ENCODE measurements at regions of chr6 and their contacts with region 1.

Region 1: GRCh38 chr6:37381579-37381978 is 27.8 kb downstream of the RNF8 start:
- DNase-seq: peak; percentile 31
- ATAC-seq: peak; percentile 68
- H3K4me3 Mint-ChIP-seq: no peak overlapping the region
- H3K27ac Mint-ChIP-seq: no peak overlapping the region
- H3K4me1 Mint-ChIP-seq: no peaks in the 10 kb centered on the region
- H3K27me3 Mint-ChIP-seq: no peaks in the 10 kb centered on the region

Region 2: DNA sequence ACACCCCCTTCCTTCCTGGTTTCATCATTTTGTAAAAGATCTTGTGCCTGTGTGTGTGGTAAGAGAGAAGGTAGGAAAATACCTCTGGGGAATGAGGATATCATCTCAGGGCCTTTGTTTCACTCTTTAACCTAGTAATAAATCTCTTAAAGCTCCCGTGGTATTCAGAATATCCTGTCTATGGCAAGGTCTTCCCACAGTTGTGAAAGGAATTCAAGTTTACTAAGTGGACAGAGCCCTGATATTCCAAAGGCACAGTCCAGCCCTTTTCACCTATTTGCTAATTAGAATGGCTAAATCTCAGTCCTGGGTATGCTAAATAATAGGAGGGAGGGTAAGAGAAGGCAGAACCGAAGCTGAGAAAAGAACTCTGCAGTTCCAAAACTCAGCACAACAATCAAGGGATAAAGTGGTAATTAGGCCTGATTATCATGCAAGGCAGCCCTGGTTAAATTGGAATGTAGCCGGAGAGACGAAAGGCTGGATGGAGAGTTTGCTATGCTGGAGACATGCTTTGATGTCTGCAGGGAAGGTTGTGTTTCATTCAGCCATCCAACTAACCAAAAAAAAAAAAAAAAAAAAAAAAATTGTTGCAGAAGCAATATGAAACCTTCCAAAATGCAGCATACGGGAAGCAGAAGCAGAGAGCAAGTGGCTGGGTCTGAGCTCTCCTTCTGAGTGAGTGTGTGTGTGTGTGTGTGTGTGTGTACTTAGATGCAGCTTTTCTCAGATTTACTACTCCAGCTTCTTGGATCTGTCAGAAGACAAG is 240.1 kb before region 1 on chr6:
- CTCF ChIA-PET with region 1: no interaction called
- POLR2A ChIA-PET with region 1: no interaction called
- intact Hi-C with region 1: no loop called
- DNase-seq: peak; percentile 37
- ATAC-seq: peak; percentile 38
- H3K4me3 Mint-ChIP-seq: no peak overlapping the region
- H3K27ac Mint-ChIP-seq: peak overlapping the region; percentile 73
- H3K4me1 Mint-ChIP-seq: peaks cover 41% of the 10 kb centered on the region
- H3K27me3 Mint-ChIP-seq: no peaks in the 10 kb centered on the region

Region 3: GRCh38 chr6:37169496-37170272 is 211.9 kb before region 1 on chr6 and contains the start of gene PIM1:
- CTCF ChIA-PET with region 1: no interaction called
- POLR2A ChIA-PET with region 1: no interaction called
- intact Hi-C with region 1: no loop called
- DNase-seq: peak; percentile 100
- ATAC-seq: peak; percentile 76
- H3K4me3 Mint-ChIP-seq: peak within 1 kb of the TSS; percentile 91
- H3K27ac Mint-ChIP-seq: peak within 1 kb of the TSS; percentile 96
- H3K4me1 Mint-ChIP-seq: peaks cover 39% of the 10 kb centered on the region
- H3K27me3 Mint-ChIP-seq: no peaks in the 10 kb centered on the region
- total RNA-seq, gene PIM1: 137 to 163 TPM

Region 4: GRCh38 chr6:37371154-37372083 is 10.2 kb before region 1 on chr6:
- CTCF ChIA-PET with region 1: interaction called, 11 read pairs
- POLR2A ChIA-PET with region 1: no interaction called
- intact Hi-C with region 1: no loop called
- DNase-seq: no peak
- ATAC-seq: no peak
- H3K4me3 Mint-ChIP-seq: no peak overlapping the region
- H3K27ac Mint-ChIP-seq: no peak overlapping the region
- H3K4me1 Mint-ChIP-seq: peaks cover 3% of the 10 kb centered on the region
- H3K27me3 Mint-ChIP-seq: no peaks in the 10 kb centered on the region

Region 5: GRCh38 chr6:37393381-37393929 is 11.9 kb after region 1 on chr6:
- CTCF ChIA-PET with region 1: interaction called, 10 read pairs
- POLR2A ChIA-PET with region 1: interaction called, 3 read pairs
- intact Hi-C with region 1: no loop called
- DNase-seq: no peak
- ATAC-seq: no peak
- H3K4me3 Mint-ChIP-seq: no peak overlapping the region
- H3K27ac Mint-ChIP-seq: no peak overlapping the region
- H3K4me1 Mint-ChIP-seq: no peaks in the 10 kb centered on the region
- H3K27me3 Mint-ChIP-seq: peaks cover 2% of the 10 kb centered on the region

Region 6: DNA sequence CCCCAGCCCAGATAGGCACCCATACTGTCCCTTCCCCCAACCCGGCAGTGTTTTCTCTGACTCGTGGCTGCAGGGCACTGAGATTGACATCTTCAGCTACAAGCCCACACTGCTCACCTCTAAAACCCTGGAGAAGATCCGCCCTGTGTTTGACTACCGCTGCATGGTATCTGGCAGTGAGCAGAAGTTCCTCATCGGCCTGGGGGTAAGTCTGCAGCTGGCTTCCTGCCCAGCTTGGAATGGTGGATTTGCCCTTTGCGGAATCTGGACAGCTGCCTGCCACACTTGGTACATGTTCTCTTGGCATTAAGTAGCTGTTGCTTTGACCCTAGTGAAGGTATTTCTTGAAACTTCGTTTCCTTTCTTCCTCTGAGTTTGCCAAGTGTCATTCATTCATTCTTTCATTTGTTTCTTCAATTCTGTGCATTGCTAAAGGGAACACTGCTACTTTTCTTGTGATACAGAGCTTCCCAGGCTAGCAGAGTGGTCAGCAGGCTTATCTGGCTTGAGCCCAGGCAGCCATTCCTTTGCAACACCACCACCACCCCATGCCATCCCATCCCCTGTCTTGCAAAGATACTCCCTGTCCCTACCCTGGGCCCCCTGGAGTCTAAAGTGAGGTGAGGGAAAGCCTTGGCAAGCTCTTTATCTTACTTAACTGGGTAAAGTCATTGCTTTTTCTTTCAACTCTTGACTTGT is 92.0 kb after region 1 on chr6:
- CTCF ChIA-PET with region 1: no interaction called
- POLR2A ChIA-PET with region 1: no interaction called
- intact Hi-C with region 1: no loop called
- DNase-seq: no peak
- ATAC-seq: no peak
- H3K4me3 Mint-ChIP-seq: no peak overlapping the region
- H3K27ac Mint-ChIP-seq: no peak overlapping the region
- H3K4me1 Mint-ChIP-seq: peaks cover 5% of the 10 kb centered on the region
- H3K27me3 Mint-ChIP-seq: no peaks in the 10 kb centered on the region

Region 7: GRCh38 chr6:37538107-37538506 is 156.5 kb after region 1 on chr6:
- CTCF ChIA-PET with region 1: no interaction called
- POLR2A ChIA-PET with region 1: no interaction called
- intact Hi-C with region 1: no loop called
- DNase-seq: peak; percentile 39
- ATAC-seq: peak; percentile 24
- H3K4me3 Mint-ChIP-seq: no peak overlapping the region
- H3K27ac Mint-ChIP-seq: no peak overlapping the region
- H3K4me1 Mint-ChIP-seq: peaks cover 20% of the 10 kb centered on the region
- H3K27me3 Mint-ChIP-seq: no peaks in the 10 kb centered on the region